Ovary (tissue), 10 donors: ENCODE measurements at regions of chr10 and their contacts with region 1.

Region 1: DNA sequence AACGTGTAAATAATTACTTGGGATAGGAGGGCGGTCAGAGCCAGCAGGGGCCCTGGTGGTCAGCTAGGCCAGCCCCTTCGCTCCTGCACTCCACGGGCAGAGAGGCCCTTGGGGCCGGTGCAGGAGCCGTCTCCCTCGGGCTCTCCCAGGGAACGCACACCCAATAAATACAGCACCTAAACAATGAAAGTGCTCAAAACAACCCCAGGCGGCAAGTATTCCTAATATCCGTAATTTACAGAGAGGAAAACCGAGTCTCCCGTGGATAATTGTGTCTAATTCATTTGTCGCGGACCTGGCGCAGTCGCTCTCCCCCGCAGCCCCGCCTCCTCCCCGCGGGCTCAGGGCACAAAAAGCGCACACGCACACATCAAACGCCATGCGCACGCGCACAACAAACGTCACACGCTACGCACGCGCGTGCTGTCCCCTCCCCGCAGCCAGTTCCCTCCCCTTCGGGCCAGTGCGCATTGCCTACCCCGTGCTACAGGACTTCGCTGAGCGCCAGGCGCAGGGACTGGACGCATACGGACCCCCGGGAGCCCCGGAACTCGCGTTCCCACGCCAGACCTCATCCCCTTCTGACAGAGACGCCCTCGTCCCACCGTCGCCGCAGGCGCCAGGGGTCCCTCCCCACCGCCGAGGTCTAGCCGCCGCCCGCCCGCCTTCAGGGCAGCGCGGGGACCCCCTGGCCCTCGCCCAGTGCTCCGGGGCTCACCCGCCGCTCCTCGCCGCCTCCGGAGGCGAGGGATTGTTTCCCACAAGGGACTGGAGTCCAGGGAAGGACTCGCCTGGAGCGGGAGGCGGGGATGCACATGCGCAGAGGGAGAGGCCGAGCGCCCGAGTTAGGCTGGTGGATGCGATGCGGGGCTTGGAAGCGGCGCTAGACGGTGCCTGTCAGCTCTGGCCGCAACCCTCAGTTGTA is at the start of gene ZNF248:
- DNase-seq: peak; percentile 97 to 98 (median 97)
- H3K4me3 ChIP-seq: peak within 1 kb of the TSS; percentile 92
- H3K27ac ChIP-seq: peak within 1 kb of the TSS; percentile 98 to 99
- H3K4me1 ChIP-seq: peaks cover 8% of the 10 kb centered on the region
- H3K27me3 ChIP-seq: no peaks in the 10 kb centered on the region
- CTCF ChIP-seq: no peak
- EP300 ChIP-seq: peak; percentile 5
- POLR2A ChIP-seq: peak; percentile 99
- total RNA-seq, gene ZNF248: 13.6 to 19.9 (median 17.5) TPM

Region 2: DNA sequence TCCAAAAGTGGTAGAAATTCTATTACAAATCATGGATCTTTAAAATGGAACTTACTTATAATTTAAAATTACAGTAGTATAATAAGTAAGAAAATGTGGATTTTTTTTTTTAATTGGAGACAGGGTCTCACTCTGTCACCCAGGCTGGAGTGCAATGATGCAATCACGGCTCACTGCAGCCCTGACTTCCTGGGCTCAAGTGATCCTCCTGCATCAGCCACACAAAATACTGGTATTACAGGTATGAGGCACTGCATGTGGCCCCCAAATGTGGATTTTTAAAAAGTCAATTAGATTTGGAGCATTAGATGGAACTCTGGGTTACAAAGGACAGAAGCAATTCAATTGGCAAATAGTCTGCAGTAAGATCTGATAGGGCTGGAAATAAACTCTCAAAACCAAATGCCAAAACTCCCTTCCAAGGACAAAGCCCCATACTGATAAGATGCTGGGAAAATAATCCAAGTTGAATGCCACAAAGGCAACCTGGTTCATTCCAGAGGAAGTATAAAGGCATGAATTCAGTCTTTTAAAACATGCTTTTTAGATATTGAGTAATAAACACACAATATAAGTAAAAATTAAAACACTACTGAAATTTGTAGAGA is 294.3 kb before region 1 on chr10:
- intact Hi-C with region 1: no loop called
- DNase-seq: no peak
- H3K4me3 ChIP-seq: no peak overlapping the region
- H3K27ac ChIP-seq: no peak overlapping the region
- H3K4me1 ChIP-seq: no peaks in the 10 kb centered on the region
- H3K27me3 ChIP-seq: no peaks in the 10 kb centered on the region
- CTCF ChIP-seq: no peak
- EP300 ChIP-seq: no peak
- POLR2A ChIP-seq: no peak

Region 3: GRCh38 chr10:37976091-37976879 is 118.7 kb after region 1 on chr10 and contains the start of gene ZNF25:
- intact Hi-C with region 1: loop called in 2 of 4 experiments (anchors 10 kb)
- DNase-seq: peak; percentile 97 to 99 (median 98)
- H3K4me3 ChIP-seq: peak within 1 kb of the TSS; percentile 86
- H3K27ac ChIP-seq: peak within 1 kb of the TSS; percentile 92 to 95
- H3K4me1 ChIP-seq: no peaks in the 10 kb centered on the region
- H3K27me3 ChIP-seq: no peaks in the 10 kb centered on the region
- CTCF ChIP-seq: peak; percentile 81 to 94 (median 84)
- EP300 ChIP-seq: no peak
- POLR2A ChIP-seq: peak; percentile 84
- total RNA-seq, gene ZNF25: 10.8 to 22.5 (median 18.3) TPM

Region 4: DNA sequence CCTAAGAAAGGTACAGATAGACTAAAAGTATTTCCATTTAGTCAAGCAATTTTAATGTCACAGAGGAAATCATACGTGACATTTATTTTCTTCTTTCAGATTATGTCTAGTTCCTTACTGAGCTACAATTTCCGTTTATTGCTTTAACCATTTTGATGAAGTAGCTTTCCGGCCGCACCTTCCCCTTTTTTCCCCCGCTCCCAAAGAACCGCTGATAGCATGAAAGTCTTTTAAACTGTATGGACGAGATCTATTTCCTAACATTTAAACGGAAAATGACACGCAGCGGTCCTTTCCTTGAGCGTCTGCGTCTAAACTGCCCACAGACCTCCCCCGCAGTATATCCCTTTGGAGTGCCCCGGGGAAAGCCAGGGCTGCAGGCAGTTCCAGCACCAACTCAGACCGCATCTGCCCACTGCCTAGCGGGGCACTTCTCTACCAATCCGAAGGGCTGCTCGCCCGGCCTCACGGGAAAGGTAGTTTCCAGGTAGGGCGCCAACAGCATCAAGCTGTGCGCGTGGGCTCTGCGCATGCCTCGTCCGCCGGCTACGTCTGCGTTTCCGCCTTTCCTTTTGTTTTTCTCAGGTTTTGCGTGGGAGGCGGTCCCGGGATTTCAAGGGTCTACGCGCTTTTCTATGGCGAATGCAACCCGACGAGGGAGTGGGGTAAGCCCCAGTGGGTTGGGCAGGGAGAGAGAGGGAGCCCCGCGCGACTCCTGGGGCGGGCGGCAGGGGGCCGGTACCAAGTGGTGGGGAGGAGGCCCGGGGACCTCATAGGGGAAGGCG is 152.8 kb after region 1 on chr10 and contains the start of gene ZNF33A:
- intact Hi-C with region 1: loop called in 1 of 4 experiments (anchors 5 kb)
- DNase-seq: peak; percentile 91 to 95 (median 92)
- H3K4me3 ChIP-seq: peak within 1 kb of the TSS; percentile 77
- H3K27ac ChIP-seq: peak within 1 kb of the TSS; percentile 85 to 99
- H3K4me1 ChIP-seq: no peaks in the 10 kb centered on the region
- H3K27me3 ChIP-seq: no peaks in the 10 kb centered on the region
- CTCF ChIP-seq: peak in 1 of 3 donors; percentile 6
- EP300 ChIP-seq: no peak
- POLR2A ChIP-seq: peak; percentile 35
- total RNA-seq, gene ZNF33A: 24.5 to 36.3 (median 29.1) TPM

Region 5: GRCh38 chr10:38094158-38094920 is 236.8 kb after region 1 on chr10 and contains the start of gene ZNF37A:
- intact Hi-C with region 1: loop called in 1 of 4 experiments (anchors 10 kb)
- DNase-seq: peak; percentile 89 to 94 (median 90)
- H3K4me3 ChIP-seq: peak within 1 kb of the TSS; percentile 95
- H3K27ac ChIP-seq: peak within 1 kb of the TSS; percentile 17 to 81
- H3K4me1 ChIP-seq: peaks cover 5% of the 10 kb centered on the region
- H3K27me3 ChIP-seq: no peaks in the 10 kb centered on the region
- CTCF ChIP-seq: no peak
- EP300 ChIP-seq: no peak
- POLR2A ChIP-seq: no peak
- total RNA-seq, gene ZNF37A: 17.9 to 26.8 (median 21.6) TPM